ENCODE measurements at regions of chr7 and their contacts with region 1.

Region 1: DNA sequence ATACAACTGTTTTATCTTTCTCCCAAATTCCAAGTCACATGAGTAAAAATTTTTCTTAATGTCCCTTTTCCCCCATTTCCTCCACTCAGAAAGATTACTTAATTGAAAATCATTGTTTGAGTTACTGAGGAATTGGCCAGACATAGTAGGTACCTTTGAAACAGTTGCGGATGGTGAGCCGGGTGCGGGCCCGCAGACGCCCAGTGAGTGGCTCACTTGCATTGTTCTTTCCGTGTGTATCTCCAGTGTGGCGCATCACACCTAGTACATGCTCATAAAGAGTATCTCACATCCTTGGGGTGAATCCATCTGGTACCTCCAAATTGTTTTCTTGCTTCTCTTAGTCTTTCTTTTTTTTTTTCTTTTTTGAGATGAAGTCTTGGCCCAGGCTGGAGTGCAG is 14.3 kb downstream of the TRRAP start:
- DNase-seq: no peak
- H3K4me3 ChIP-seq: no peak overlapping the region
- CTCF ChIP-seq: no peak

Region 2: GRCh38 chr7:98930921-98931320 is 38.3 kb after region 1 on chr7:
- in situ Hi-C with region 1: loop called (anchors 5 kb)
- DNase-seq: no peak
- H3K4me3 ChIP-seq: no peak overlapping the region
- CTCF ChIP-seq: no peak

Region 3: GRCh38 chr7:98981701-98982100 is 89.1 kb after region 1 on chr7:
- in situ Hi-C with region 1: loop called (anchors 10 kb)
- DNase-seq: no peak
- H3K4me3 ChIP-seq: no peak overlapping the region
- CTCF ChIP-seq: no peak